Naive thymus-derived CD4-positive, alpha-beta T cell (primary cell): ENCODE measurements at regions of chr4 and their contacts with region 1.

Region 1: DNA sequence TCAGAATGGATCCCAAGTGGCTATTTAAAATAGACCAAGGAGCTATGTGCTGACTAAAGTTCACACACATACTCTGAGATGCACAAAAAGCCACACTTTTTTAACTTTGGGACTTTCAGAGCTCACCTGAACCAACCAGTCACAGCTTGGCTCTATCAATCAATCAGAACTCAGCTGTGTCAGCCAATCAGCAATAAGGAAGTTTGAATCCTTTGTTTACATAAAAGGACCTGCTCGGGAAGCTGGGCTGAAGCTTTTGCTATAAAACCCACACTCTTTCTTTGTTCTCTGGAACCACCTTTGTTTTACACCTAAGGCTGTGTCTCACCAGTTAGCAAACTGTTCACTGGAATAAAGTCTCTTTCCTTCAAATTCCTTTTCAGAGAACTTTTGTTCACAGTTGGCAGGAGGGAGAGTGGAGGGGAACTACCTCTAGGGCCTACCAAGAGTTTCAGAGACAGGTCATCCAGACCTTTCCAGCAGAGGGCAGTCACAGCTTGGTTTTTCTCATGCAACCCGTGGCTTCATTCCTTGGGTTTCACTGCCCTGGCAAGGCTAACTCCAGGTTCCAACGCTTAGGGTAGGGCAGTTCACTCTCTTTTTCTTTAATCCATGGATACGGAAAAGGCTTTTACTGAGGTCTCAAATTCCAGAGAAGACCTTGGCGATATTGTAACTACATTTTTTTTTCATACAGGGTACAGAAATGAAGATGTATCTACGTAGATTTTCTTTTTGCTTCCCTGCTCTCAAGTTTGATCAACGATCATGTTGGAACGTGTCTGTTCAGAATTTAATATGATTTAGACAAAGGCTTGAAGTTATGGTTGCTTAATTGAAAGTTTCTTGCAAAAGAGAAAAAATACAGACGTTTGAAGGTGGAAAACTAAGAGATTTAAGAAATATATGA is 80.7 kb downstream of the GPRIN3 start:
- DNase-seq: peak; percentile 37 to 79 (median 68)
- ATAC-seq: peak; percentile 93
- H3K4me3 ChIP-seq: peak overlapping the region; percentile 21
- H3K4me3 Mint-ChIP-seq: peak overlapping the region in 9 of 10 donors; percentile 54 to 78 (median 63)
- H3K27ac ChIP-seq: no peak overlapping the region
- H3K27ac Mint-ChIP-seq: peak overlapping the region in 2 of 9 donors; percentile 19 to 34
- H3K4me1 ChIP-seq: no peaks in the 10 kb centered on the region
- H3K4me1 Mint-ChIP-seq: peaks cover 0 to 10% (median 5%) of the 10 kb centered on the region in 7 donors
- H3K27me3 ChIP-seq: no peaks in the 10 kb centered on the region
- H3K27me3 Mint-ChIP-seq: peaks cover 0 to 7% (median 0%) of the 10 kb centered on the region in 5 donors

Region 2: GRCh38 chr4:88697588-88698329 is 529.2 kb before region 1 on chr4 and contains the start of gene NAP1L5:
- CTCF ChIA-PET with region 1: no interaction called
- POLR2A ChIA-PET with region 1: no interaction called
- intact Hi-C with region 1: no loop called
- DNase-seq: peak; percentile 57 to 88 (median 81)
- ATAC-seq: peak; percentile 95
- H3K4me3 ChIP-seq: peak within 1 kb of the TSS; percentile 68
- H3K4me3 Mint-ChIP-seq: peak within 1 kb of the TSS; percentile 82 to 92 (median 88)
- H3K27ac ChIP-seq: peak within 1 kb of the TSS; percentile 79
- H3K27ac Mint-ChIP-seq: peak within 1 kb of the TSS; percentile 79 to 96 (median 94)
- H3K4me1 ChIP-seq: peaks cover 0 to 13% of the 10 kb centered on the region in 2 donors
- H3K4me1 Mint-ChIP-seq: peaks cover 5 to 35% (median 22%) of the 10 kb centered on the region in 7 donors
- H3K27me3 ChIP-seq: no peaks in the 10 kb centered on the region
- H3K27me3 Mint-ChIP-seq: no peaks in the 10 kb centered on the region
- total RNA-seq, gene NAP1L5: 1.4 to 11.7 (median 4.5) TPM

Region 3: DNA sequence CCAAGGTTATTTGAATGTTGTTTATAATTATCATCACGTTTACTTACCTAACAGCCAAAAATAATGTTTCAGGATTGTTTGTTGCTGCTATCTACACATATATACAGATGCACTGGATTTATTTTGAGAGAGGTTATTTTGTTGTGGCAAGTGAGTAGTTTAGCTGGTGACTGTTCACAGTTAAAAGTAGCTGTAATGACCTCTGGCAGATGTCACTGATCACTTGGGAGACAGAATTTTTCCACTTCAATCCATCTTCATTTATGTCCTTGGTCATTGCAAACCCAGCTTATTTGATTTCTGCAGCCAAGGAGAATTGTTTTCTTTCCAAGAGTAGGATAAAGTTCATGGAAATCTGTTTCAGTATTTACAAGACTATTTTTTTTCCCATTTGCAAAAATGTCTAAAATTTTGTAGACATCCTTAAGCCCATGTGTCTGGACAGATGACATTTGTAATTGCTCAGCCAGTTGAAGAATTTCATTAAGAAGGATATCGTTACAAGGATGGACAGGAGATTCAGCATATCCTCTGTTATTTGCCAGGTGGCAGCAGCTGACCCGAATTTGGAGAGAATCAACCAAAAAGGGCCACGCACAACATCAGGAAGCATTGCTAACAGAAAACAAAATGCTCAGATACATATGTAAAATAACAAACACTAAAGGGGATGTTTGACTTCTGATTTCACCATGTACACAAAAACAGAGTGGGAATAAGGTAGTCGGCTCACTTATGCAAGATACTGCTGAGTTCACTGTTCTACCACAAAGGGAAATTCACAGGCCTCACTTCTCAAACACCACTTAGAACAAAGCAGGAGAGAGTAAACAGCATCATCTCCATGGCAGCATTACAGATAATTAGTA is 16.2 kb after region 1 on chr4:
- CTCF ChIA-PET with region 1: interaction called, 10 read pairs
- POLR2A ChIA-PET with region 1: no interaction called
- intact Hi-C with region 1: loop called in 1 of 2 experiments (anchors 1 kb)
- DNase-seq: peak in 7 of 9 donors; percentile 16 to 67 (median 35)
- ATAC-seq: peak; percentile 96
- H3K4me3 ChIP-seq: no peak overlapping the region
- H3K4me3 Mint-ChIP-seq: peak overlapping the region in 5 of 10 donors; percentile 9 to 73 (median 20)
- H3K27ac ChIP-seq: peak overlapping the region; percentile 39
- H3K27ac Mint-ChIP-seq: peak overlapping the region; percentile 44 to 94 (median 80)
- H3K4me1 ChIP-seq: peaks cover 13 to 40% of the 10 kb centered on the region in 2 donors
- H3K4me1 Mint-ChIP-seq: peaks cover 15 to 62% (median 46%) of the 10 kb centered on the region in 7 donors
- H3K27me3 ChIP-seq: no peaks in the 10 kb centered on the region
- H3K27me3 Mint-ChIP-seq: no peaks in the 10 kb centered on the region

Region 4: GRCh38 chr4:89254847-89255246 is 27.9 kb after region 1 on chr4:
- CTCF ChIA-PET with region 1: interaction called, 10 read pairs
- POLR2A ChIA-PET with region 1: no interaction called
- intact Hi-C with region 1: loop called (anchors 1 kb)
- DNase-seq: peak; percentile 23 to 51 (median 35)
- ATAC-seq: peak; percentile 85
- H3K4me3 ChIP-seq: no peak overlapping the region
- H3K4me3 Mint-ChIP-seq: peak overlapping the region in 3 of 10 donors; percentile 3 to 25 (median 6)
- H3K27ac ChIP-seq: no peak overlapping the region
- H3K27ac Mint-ChIP-seq: peak overlapping the region; percentile 15 to 85 (median 66)
- H3K4me1 ChIP-seq: peaks cover 15 to 16% of the 10 kb centered on the region in 2 donors
- H3K4me1 Mint-ChIP-seq: peaks cover 44 to 86% (median 74%) of the 10 kb centered on the region in 7 donors
- H3K27me3 ChIP-seq: no peaks in the 10 kb centered on the region
- H3K27me3 Mint-ChIP-seq: no peaks in the 10 kb centered on the region

Region 5: GRCh38 chr4:89353514-89353913 is 126.6 kb after region 1 on chr4:
- CTCF ChIA-PET with region 1: interaction called, 7 read pairs
- POLR2A ChIA-PET with region 1: no interaction called
- intact Hi-C with region 1: loop called in 1 of 2 experiments (anchors 1 kb)
- DNase-seq: no peak
- ATAC-seq: no peak
- H3K4me3 ChIP-seq: no peak overlapping the region
- H3K4me3 Mint-ChIP-seq: no peak overlapping the region
- H3K27ac ChIP-seq: no peak overlapping the region
- H3K27ac Mint-ChIP-seq: peak overlapping the region in 1 of 9 donors; percentile 46
- H3K4me1 ChIP-seq: no peaks in the 10 kb centered on the region
- H3K4me1 Mint-ChIP-seq: peaks cover 0 to 3% (median 0%) of the 10 kb centered on the region in 7 donors
- H3K27me3 ChIP-seq: no peaks in the 10 kb centered on the region
- H3K27me3 Mint-ChIP-seq: peaks cover 0 to 12% (median 0%) of the 10 kb centered on the region in 5 donors

Region 6: DNA sequence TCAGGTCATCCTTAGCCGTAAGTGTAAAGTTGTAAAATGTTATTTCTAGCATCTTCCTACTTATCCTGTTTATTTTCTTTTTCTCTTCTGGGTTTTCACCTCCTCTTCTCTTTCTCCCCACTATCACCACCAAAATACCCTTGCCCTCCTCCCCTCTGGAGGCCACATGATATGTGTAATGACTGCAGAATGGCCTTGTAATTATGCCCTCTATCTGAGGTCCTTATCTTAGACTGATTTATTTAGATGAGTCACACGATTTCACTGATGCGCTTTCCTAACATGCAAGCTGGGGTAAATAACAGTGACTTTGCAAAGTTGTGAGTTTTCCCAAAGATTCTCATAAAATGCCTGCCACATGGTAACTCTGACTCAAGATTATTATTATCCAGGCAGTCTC is 312.5 kb after region 1 on chr4:
- CTCF ChIA-PET with region 1: no interaction called
- POLR2A ChIA-PET with region 1: no interaction called
- intact Hi-C with region 1: no loop called
- DNase-seq: no peak
- ATAC-seq: no peak
- H3K4me3 ChIP-seq: no peak overlapping the region
- H3K4me3 Mint-ChIP-seq: no peak overlapping the region
- H3K27ac ChIP-seq: no peak overlapping the region
- H3K27ac Mint-ChIP-seq: no peak overlapping the region
- H3K4me1 ChIP-seq: no peaks in the 10 kb centered on the region
- H3K4me1 Mint-ChIP-seq: peaks cover 0 to 2% (median 0%) of the 10 kb centered on the region in 7 donors
- H3K27me3 ChIP-seq: no peaks in the 10 kb centered on the region
- H3K27me3 Mint-ChIP-seq: peaks cover 16 to 32% (median 20%) of the 10 kb centered on the region in 5 donors

Region 7: DNA sequence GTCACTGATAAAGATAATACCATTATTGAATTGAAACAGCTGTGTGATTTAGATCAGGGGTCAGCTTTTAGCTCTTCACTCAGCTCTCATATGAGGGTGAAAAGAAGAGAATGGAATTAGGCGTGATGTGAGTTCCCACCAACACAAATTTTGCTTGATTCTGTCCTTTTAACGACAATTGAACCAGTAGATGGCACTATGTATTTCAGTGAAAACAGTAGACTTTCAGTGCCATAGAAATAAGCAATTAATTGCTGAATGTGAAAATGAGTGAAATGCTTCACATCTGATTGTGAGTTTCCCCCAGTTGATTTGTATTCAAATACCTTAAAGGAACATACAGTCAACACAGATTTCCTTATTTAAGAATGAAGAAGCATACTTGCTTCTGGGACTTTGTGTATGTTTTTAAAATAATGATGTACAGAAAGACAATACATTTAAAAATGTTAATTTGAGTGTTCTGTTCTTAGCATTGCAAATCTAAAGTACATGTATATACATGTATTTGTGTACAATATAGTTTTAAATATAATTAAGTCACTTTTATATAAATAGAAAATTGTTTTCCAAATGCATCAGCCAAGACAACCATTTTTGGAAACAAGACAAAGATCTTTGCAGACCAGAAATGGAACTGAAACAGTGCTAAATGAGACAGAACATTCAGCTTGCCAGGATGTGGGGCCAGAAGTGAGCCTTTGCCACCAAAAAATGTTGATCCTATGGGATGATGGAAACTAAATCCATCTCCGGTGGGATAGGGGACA is 431.2 kb after region 1 on chr4:
- CTCF ChIA-PET with region 1: no interaction called
- POLR2A ChIA-PET with region 1: no interaction called
- intact Hi-C with region 1: loop called in 1 of 2 experiments (anchors 2 kb)
- DNase-seq: peak in 3 of 9 donors; percentile 9 to 16 (median 14)
- ATAC-seq: no peak
- H3K4me3 ChIP-seq: no peak overlapping the region
- H3K4me3 Mint-ChIP-seq: no peak overlapping the region
- H3K27ac ChIP-seq: no peak overlapping the region
- H3K27ac Mint-ChIP-seq: no peak overlapping the region
- H3K4me1 ChIP-seq: no peaks in the 10 kb centered on the region
- H3K4me1 Mint-ChIP-seq: peaks cover 0 to 3% (median 0%) of the 10 kb centered on the region in 7 donors
- H3K27me3 ChIP-seq: no peaks in the 10 kb centered on the region
- H3K27me3 Mint-ChIP-seq: peaks cover 0 to 26% (median 5%) of the 10 kb centered on the region in 5 donors